Ovary (tissue), 10 donors: ENCODE measurements at regions of chr11 and their contacts with region 1.

Region 1: DNA sequence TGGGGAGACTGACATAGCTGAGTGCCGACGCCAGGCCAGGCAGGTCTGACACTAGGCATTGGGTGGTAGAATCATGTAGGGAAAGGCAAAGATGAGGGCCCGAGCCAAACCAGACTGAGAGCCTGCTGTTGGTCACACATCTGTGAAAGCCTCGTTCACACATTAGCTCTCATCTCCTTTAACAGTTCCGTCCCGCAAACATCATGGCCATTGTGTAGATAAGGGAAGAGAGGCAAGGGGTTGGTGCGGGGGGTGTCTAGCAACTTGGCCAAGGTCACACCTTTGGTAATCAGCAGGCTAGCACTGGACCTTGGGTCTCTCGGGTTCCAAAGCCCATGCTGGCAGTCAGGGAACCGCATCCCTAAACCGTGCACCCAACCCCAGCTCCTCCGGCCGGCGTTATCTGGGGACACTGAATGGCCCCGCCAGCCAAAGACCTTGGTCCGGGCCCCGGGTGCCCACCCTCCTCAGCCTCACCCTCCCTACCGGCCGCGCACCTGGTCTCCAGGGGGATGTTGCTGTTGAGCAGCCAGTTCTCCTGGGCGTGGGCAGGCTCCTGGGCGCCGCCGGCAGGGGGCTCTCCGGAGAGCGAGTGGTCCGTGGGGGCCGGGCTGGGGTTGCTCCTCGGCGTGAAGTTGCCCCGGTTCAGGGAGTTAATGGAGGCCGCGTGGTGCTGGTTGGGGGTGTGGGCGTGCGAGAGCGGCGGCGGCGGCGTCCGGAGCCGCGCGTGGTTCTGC is 328.3 kb upstream of the NARS2 start:
- DNase-seq: no peak
- H3K4me3 ChIP-seq: no peak overlapping the region
- H3K27ac ChIP-seq: no peak overlapping the region
- H3K4me1 ChIP-seq: no peaks in the 10 kb centered on the region
- H3K27me3 ChIP-seq: no peaks in the 10 kb centered on the region
- CTCF ChIP-seq: no peak
- EP300 ChIP-seq: no peak
- POLR2A ChIP-seq: no peak

Region 2: GRCh38 chr11:80765020-80765419 is 1862.1 kb after region 1 on chr11:
- intact Hi-C with region 1: loop called in 1 of 4 experiments (anchors 5 kb)
- DNase-seq: no peak
- H3K4me3 ChIP-seq: no peak overlapping the region
- H3K27ac ChIP-seq: no peak overlapping the region
- H3K4me1 ChIP-seq: no peaks in the 10 kb centered on the region
- H3K27me3 ChIP-seq: no peaks in the 10 kb centered on the region
- CTCF ChIP-seq: no peak
- EP300 ChIP-seq: no peak
- POLR2A ChIP-seq: no peak